ENCODE measurements at regions of chr2 and their contacts with region 1.

Region 1: DNA sequence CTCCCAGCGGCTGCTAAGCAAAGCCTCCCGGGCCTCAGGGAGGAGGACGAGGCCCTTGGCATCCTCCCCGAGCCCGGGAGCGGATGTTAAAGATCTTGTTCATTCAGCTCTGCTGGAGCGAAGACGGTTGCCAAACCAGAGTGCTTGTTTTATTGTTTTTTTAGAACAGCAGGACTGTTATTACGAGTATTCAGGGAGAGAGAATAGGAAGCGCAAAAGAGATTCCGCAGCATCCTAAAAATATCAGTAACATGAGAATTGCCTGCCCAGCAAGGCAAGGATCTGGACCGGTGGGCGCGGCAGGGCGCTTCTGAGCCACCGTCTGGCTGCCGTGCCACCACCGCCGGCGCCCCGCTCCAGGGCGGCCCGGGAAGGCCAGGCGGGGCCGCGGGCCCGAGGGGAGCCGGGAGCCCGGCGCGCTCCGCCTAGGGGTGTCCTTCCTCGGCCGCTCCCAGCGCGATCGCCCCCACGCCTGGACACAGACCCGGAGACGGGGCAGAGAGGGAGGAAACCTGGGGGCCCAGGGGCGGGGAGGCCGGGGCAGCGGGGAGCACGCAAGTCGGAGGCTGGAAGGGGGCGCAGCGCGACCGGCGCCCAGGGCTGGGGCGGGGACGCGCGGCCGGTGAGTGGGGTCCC is 859 bp downstream of the CYS1 start:
- DNase-seq: peak; percentile 30
- H3K27ac ChIP-seq: peak overlapping the region; percentile 53
- CTCF ChIP-seq: no peak

Region 2: DNA sequence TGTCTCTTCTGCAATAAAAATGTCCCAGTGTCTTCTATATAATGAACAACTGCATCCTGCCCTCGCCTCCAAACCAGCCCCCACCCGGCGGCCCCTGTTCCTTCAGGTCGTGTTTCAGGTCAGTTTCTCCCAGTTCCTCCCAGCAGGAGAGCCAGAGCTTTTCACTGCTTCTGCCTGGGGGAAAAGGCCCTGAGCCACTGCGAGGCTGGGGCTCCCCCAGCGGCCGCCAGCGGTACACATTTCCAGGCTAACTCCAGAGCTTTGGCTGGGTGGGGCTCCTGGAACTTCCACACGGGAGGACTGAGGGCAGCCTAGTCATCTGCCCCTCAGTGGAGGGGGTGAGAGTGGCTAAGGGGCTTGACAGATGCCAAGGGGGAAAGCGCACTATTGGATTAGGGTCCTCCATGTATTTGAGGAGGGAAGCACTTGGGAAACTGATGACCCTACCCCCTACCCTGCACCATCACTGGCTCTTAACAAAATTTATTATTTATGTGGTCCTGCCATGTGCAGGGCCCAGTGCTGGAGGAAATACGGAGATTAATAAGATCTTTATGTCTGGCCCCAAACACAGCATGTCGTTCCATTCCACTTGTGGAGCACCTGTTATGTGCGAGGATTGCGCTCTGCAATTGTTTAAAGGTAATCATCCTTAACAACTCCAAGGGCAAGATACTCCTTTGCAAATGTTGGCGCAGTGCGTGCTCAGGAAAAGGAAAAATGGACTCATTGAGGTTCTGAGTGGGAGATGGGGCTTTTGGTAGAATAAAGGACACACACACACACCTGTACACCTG is 18.2 kb after region 1 on chr2:
- CTCF ChIA-PET with region 1: interaction called, 13 read pairs
- POLR2A ChIA-PET with region 1: interaction called, 3 read pairs
- DNase-seq: peak; percentile 88
- H3K27ac ChIP-seq: peak overlapping the region; percentile 59
- CTCF ChIP-seq: peak; percentile 96

Region 3: DNA sequence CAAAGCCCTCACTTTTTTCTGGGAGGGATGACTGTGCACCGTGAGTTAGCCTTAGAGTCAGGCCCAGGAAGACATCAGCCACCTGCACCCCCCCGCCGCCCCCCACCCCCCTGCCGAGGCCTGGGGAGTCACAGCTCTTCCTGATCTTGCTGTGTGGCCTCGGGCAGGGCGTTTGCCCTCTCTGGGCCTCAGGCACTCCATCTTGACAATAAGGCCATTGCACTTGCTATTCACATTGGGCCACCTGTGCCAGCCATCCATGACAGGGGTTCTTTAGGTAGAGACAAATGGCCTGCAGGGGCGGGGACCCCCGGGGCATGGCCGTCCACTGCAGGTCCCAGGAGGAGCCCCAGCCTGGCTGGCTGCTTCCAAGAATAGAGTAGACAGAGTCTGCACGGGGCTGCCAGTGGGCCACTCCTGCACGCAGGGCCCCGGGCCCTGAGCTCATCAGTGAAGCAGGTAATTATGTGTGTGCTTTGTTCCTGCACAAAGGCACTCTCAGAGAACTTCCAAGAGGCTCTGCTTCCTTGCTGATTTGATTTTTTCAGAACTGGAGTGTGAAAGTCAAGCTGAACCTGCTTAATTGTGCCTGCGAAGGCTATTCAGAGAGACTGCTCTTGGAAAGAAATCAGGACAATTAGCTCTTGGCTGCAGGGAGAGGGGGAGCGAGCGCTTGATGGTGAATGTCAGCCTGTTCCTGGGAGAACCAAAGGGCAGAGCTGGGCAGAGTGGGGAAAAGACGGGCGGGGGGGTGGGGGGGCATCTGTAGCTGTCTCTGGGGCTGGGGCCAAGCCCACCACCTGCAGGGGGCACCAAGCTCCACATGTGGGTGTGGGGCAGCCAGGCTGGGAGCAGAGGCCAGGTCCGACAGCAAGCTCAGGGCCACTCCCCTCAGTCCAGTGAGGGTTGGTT is 83.5 kb after region 1 on chr2:
- CTCF ChIA-PET with region 1: no interaction called
- POLR2A ChIA-PET with region 1: no interaction called
- DNase-seq: no peak
- H3K27ac ChIP-seq: no peak overlapping the region
- CTCF ChIP-seq: no peak